ENCODE measurements at regions of chr12 and their contacts with region 1.

Region 1: DNA sequence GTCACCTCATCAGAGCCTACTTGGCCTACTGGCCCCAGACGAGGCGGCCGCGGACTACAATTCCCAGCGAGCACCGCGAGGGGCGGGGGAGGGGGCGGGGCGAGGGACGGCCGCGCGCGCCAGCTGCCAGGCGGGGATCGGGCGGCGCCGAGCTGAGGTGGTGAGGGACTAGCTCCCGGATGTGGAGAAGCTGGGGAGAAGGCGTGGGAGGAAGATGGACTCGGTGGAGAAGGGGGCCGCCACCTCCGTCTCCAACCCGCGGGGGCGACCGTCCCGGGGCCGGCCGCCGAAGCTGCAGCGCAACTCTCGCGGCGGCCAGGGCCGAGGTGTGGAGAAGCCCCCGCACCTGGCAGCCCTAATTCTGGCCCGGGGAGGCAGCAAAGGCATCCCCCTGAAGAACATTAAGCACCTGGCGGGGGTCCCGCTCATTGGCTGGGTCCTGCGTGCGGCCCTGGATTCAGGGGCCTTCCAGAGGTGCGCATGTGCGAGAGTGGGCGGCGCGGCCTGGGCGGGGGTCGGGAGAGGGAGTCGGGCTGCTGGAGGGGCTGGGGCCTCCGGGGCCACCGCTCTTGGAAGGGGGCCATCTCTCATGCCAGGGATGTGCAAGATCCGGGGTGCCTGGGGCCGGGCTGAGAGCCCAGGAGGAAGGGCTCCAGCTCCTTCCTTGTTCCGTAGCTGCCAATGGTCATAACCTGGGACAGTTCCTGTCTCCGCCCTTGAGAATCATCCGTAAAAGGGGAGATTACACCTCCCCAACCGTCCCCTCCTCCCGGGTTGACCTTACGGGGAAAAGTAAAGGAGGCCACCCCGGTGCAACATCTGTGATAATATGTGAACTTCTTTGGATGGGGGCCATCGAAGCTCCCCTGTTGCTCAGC is at the start of gene CMAS:
- DNase-seq: peak; percentile 81
- H3K4me3 Mint-ChIP-seq: peak within 1 kb of the TSS; percentile 86
- H3K27ac Mint-ChIP-seq: peak within 1 kb of the TSS; percentile 66
- H3K4me1 Mint-ChIP-seq: peaks cover 43% of the 10 kb centered on the region
- H3K27me3 Mint-ChIP-seq: no peaks in the 10 kb centered on the region
- CTCF ChIP-seq: no peak
- total RNA-seq, gene CMAS: 41.5 and 45.8 TPM in 2 replicates

Region 2: GRCh38 chr12:22059976-22060647 is 13.8 kb after region 1 on chr12:
- CTCF ChIA-PET with region 1: interaction called, 3 read pairs
- POLR2A ChIA-PET with region 1: interaction called, 23 read pairs
- intact Hi-C with region 1: no loop called
- DNase-seq: no peak
- H3K4me3 Mint-ChIP-seq: no peak overlapping the region
- H3K27ac Mint-ChIP-seq: no peak overlapping the region
- H3K4me1 Mint-ChIP-seq: no peaks in the 10 kb centered on the region
- H3K27me3 Mint-ChIP-seq: no peaks in the 10 kb centered on the region
- CTCF ChIP-seq: no peak

Region 3: DNA sequence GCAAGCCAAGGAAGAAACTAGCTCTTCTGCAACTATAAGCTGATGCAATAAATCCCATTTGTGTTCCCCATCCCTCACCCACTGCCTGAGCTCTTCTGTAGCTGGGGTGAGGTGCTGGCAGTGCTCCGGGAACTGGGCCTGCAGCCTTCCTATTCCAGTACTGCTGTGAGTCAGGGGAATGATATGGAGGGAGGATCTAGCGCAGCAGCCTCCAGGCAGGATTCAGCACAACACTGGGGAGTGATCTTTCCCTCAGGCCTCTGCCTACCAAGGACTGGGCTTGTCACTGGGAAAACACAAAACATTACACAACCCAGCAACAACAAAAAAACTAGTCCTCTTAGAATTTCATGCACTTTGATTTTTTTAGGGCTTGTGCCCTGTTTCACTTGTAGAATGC is 229.5 kb after region 1 on chr12:
- CTCF ChIA-PET with region 1: no interaction called
- POLR2A ChIA-PET with region 1: interaction called, 3 read pairs
- intact Hi-C with region 1: loop called (anchors 5 kb)
- DNase-seq: peak; percentile 99
- H3K4me3 Mint-ChIP-seq: peak overlapping the region; percentile 53
- H3K27ac Mint-ChIP-seq: peak overlapping the region; percentile 96
- H3K4me1 Mint-ChIP-seq: peaks cover 51% of the 10 kb centered on the region
- H3K27me3 Mint-ChIP-seq: no peaks in the 10 kb centered on the region
- CTCF ChIP-seq: no peak